WTC11 (cell line): ENCODE measurements at regions of chr2 and their contacts with region 1.

Region 1: GRCh38 chr2:70964596-70965386 is 13.6 kb upstream of the ANKRD53 start:
- DNase-seq: peak; percentile 87
- ATAC-seq: peak; percentile 79
- H3K4me3 Mint-ChIP-seq: peak overlapping the region; percentile 63
- H3K27ac Mint-ChIP-seq: no peak overlapping the region
- H3K4me1 Mint-ChIP-seq: peaks cover 3% of the 10 kb centered on the region
- H3K27me3 Mint-ChIP-seq: peaks cover 88% of the 10 kb centered on the region
- CTCF ChIP-seq: peak; percentile 72

Region 2: DNA sequence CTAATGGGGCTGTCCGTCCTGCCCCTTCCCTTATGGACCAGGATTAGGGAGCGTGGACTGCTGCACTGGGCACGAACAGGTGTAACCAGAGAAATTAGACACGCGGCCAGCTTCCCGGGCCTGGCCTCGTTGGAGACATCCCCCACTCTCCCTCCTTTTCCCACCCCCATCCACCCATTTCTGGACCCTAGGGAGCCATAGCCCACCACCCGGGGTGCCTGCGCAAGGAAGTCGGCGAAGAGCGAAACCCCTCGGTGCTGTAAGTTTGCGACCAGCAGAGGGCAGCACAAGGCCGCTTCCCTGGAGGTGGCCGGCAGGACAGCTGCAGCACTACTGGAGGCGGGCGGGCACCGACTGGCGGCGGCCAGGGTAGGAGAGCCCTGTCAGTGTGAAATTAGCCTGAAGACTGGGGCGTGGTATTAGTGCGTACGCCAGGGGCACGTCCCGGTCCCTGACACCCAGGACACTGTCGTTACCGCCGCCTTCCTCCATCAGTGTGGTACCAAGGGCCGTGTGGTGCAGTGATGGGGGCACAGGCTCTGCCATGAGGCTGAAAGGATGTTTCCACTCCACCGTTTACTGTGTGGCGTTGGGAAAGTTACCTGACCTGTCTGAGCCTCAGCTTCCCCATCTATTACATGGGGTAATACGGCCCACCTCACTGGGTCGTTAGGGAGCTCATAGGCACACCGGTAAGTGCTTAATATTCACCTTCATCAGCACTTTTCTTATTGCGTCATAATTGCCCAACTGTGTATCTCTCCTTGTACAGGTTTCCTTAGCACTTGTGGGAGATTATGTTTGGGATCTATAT is 93.2 kb before region 1 on chr2:
- CTCF ChIA-PET with region 1: interaction called, 10 read pairs
- POLR2A ChIA-PET with region 1: no interaction called
- DNase-seq: peak; percentile 95
- ATAC-seq: peak; percentile 98
- H3K4me3 Mint-ChIP-seq: no peak overlapping the region
- H3K27ac Mint-ChIP-seq: no peak overlapping the region
- H3K4me1 Mint-ChIP-seq: no peaks in the 10 kb centered on the region
- H3K27me3 Mint-ChIP-seq: peaks cover 65% of the 10 kb centered on the region
- CTCF ChIP-seq: peak; percentile 79

Region 3: GRCh38 chr2:70907130-70908057 is 57.4 kb before region 1 on chr2:
- CTCF ChIA-PET with region 1: interaction called, 15 read pairs
- POLR2A ChIA-PET with region 1: no interaction called
- DNase-seq: no peak
- ATAC-seq: peak; percentile 10; the same call in 1 of the 2 replicates
- H3K4me3 Mint-ChIP-seq: peak overlapping the region; percentile 57
- H3K27ac Mint-ChIP-seq: no peak overlapping the region
- H3K4me1 Mint-ChIP-seq: peaks cover 31% of the 10 kb centered on the region
- H3K27me3 Mint-ChIP-seq: peaks cover 100% of the 10 kb centered on the region
- CTCF ChIP-seq: no peak

Region 4: DNA sequence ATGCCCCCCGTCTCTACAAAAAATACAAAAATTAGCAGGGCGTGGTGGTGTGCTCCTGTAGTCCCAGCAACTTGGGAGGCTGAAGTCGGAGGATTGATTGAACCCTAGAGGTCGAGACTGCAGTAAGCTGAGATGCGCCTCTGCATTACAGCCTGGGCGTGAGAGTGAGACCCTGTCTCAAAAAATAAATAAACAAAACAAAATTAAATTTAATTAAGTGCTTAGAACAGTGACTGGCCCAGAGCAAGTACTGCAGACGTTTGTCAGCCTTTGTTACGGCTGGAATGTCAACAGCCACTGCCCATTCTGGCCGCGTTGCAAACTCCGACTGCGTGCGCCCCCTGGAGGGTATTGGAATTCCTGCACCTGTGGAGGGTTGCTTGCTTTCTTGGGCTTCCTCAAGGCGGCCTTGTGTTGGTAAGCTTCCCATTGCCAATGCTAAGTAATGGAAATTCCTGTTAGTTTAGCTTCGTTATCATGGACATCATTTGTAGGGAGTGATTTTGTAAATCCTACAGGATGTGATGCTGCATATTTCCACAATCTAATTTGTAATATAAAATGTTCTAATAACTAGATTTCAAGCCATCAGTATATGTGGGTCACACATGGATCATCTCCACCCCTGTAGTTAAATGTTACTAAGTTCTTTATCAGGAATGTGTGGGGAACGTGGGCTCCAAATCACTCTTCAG is 45.0 kb before region 1 on chr2:
- CTCF ChIA-PET with region 1: interaction called, 18 read pairs
- POLR2A ChIA-PET with region 1: no interaction called
- DNase-seq: peak; percentile 94
- ATAC-seq: peak; percentile 88
- H3K4me3 Mint-ChIP-seq: no peak overlapping the region
- H3K27ac Mint-ChIP-seq: no peak overlapping the region
- H3K4me1 Mint-ChIP-seq: peaks cover 13% of the 10 kb centered on the region
- H3K27me3 Mint-ChIP-seq: peaks cover 34% of the 10 kb centered on the region
- CTCF ChIP-seq: peak; percentile 92

Region 5: GRCh38 chr2:70935468-70936164 is 29.2 kb before region 1 on chr2 and contains the start of gene ATP6V1B1:
- CTCF ChIA-PET with region 1: interaction called, 17 read pairs
- POLR2A ChIA-PET with region 1: no interaction called
- DNase-seq: peak; percentile 53
- ATAC-seq: peak; percentile 20
- H3K4me3 Mint-ChIP-seq: no peak within 1 kb of the TSS
- H3K27ac Mint-ChIP-seq: no peak within 1 kb of the TSS
- H3K4me1 Mint-ChIP-seq: peaks cover 25% of the 10 kb centered on the region
- H3K27me3 Mint-ChIP-seq: peaks cover 48% of the 10 kb centered on the region
- CTCF ChIP-seq: no peak
- total RNA-seq, gene ATP6V1B1: not detected in 3 replicates

Region 6: DNA sequence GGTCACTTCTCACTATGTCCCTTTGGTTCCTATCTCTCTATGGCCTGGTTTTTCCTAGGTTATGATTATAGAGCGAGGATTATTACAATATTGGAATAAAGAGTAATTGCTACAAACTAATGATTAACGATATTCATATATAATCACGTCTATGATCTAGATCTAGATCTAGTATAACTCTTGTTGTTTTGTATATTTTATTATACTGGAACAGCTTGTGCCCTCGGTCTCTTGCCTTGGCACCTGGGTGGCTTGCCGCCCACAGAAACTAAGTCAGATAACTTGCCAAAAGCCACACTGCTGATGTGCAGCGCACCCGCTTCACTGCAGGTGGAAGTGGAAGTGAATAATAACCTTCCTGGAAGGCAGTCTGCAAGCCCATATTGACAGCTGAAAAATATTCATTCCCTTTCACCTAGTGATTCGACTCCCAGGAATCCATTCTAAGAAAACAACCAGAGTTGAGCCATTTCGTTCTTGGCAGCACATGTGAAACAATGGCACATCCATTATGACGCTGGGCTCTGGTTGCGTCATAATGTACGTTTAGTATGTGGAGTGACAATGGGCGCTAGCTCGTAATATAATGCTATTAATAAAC is 12.9 kb after region 1 on chr2:
- CTCF ChIA-PET with region 1: interaction called, 33 read pairs
- POLR2A ChIA-PET with region 1: interaction called, 3 read pairs
- DNase-seq: no peak
- ATAC-seq: no peak
- H3K4me3 Mint-ChIP-seq: peak overlapping the region; percentile 82
- H3K27ac Mint-ChIP-seq: no peak overlapping the region
- H3K4me1 Mint-ChIP-seq: peaks cover 18% of the 10 kb centered on the region
- H3K27me3 Mint-ChIP-seq: peaks cover 50% of the 10 kb centered on the region
- CTCF ChIP-seq: peak; percentile 3; the same call in 1 of the 2 replicates

Region 7: GRCh38 chr2:71000780-71001591 is 36.2 kb after region 1 on chr2:
- CTCF ChIA-PET with region 1: interaction called, 19 read pairs
- POLR2A ChIA-PET with region 1: no interaction called
- DNase-seq: peak; percentile 77
- ATAC-seq: peak; percentile 72
- H3K4me3 Mint-ChIP-seq: peak overlapping the region; percentile 43
- H3K27ac Mint-ChIP-seq: no peak overlapping the region
- H3K4me1 Mint-ChIP-seq: peaks cover 18% of the 10 kb centered on the region
- H3K27me3 Mint-ChIP-seq: peaks cover 45% of the 10 kb centered on the region
- CTCF ChIP-seq: peak; percentile 87